CD4-positive, alpha-beta T cell (primary cell): ENCODE measurements at regions of chr5 and their contacts with region 1.

Region 1: DNA sequence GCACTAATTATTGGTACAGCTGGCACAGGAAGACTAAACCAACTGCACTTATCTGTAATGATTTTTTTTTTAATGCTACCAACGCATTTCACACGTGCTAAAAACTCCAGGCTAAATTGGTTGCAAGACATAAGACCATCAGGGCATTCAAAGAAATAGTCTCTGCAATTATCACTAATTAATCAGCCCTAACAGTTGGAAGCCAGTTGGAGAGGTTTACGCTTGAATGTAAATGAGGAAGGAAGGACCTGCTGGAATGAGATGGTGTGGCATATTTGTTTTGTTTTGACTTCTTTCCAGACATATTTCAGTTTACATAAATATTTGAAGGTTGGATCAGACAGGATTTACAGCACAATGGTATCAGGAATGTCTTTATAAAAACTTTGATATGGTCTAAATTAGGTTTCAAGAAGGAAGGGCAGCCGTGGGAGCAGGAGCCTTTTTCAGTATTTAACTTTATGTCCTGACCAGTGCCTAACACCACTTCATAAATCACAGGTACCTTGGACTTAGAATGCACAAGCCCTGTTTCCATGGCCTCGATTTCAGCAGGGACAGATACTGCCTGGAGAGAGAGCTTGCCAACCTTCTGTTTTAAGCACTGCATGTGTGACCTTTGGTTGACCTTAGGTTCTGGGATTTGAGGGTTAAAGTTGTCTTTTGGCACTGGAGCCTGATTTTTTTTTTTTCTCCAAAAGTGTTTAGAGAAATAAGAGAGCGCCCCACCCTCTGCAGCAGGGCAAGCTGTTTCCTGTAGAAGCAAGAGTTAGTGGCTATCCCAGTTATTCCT is 199.8 kb upstream of the MAP3K1 start:
- DNase-seq: peak in 1 of 14 experiments; percentile 15
- ATAC-seq: peak; percentile 25
- H3K4me3 ChIP-seq: no peak overlapping the region
- H3K4me3 Mint-ChIP-seq: peak overlapping the region; percentile 52
- H3K27ac ChIP-seq: peak overlapping the region in 1 of 2 donors; percentile 0
- H3K27ac Mint-ChIP-seq: peak overlapping the region; percentile 82
- H3K4me1 ChIP-seq: peaks cover 43% of the 10 kb centered on the region
- H3K4me1 Mint-ChIP-seq: peaks cover 65% of the 10 kb centered on the region
- H3K27me3 ChIP-seq: no peaks in the 10 kb centered on the region
- H3K27me3 Mint-ChIP-seq: no peaks in the 10 kb centered on the region
- CTCF ChIP-seq: no peak

Region 2: DNA sequence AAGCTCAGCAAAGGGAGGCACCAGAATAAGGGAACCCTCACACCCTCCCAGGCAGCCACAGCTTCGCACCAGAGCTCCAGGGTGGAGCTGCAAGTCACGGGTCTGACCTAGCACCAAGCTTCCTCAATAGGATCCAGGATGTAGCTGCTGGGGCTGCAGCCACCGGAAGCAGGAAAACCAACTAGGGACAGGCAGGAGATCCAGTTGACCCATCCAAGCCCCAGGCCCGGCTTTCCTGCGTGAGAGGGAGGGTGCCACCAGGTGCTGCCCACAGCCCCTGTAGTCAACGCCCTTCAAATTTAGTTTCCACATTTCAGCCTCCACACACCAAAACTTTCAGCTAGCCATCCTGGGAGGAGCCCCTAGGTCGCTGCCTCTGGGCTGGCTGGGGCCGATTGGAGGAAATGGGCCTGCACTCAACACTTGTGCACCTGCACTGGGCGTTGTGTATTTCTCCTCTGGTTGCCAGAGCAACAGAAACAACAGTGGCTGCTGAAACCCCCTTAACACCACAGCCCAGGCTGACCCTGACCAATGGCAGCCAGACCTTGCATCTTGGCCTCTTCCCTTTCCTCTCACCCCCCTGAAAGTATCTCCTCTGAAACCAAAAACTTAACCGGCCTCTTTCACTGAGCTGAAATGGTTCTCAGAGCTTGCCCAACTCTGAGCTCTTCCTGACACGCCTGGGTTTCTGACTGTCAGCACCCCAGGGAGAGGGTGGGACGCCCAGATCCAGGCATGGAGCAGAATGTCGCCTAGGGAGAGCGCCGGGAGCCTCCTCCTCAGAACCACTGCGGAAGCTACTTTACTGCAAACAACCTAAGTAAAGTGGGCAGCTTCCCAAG is 26.7 kb before region 1 on chr5:
- CTCF ChIA-PET with region 1: interaction called, 3 read pairs
- POLR2A ChIA-PET with region 1: interaction called, 10 read pairs
- intact Hi-C with region 1: no loop called
- DNase-seq: peak; percentile 32 to 92 (median 60)
- ATAC-seq: peak; percentile 72
- H3K4me3 ChIP-seq: no peak overlapping the region
- H3K4me3 Mint-ChIP-seq: peak overlapping the region; percentile 52
- H3K27ac ChIP-seq: peak overlapping the region; percentile 60 to 95
- H3K27ac Mint-ChIP-seq: peak overlapping the region; percentile 87
- H3K4me1 ChIP-seq: peaks cover 51% of the 10 kb centered on the region
- H3K4me1 Mint-ChIP-seq: peaks cover 62% of the 10 kb centered on the region
- H3K27me3 ChIP-seq: no peaks in the 10 kb centered on the region
- H3K27me3 Mint-ChIP-seq: no peaks in the 10 kb centered on the region
- CTCF ChIP-seq: no peak

Region 3: DNA sequence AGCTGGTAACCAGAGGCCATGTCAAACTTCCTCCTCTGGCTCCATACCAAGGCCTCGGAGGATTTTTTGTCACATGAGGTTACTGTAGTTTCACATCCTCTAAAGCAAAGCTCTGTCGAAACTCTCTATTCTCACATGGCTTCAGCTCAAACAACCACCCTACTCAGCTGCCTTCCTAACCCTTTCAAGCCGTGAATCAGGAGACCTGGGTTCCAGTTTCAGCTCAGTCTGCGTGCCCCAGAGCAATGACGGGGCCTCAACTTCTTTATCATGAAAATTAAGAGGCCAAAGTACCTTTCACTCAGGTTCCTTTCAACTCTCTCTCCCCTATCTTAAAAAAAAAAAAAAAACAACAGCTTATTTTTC is 54.5 kb after region 1 on chr5:
- CTCF ChIA-PET with region 1: no interaction called
- POLR2A ChIA-PET with region 1: interaction called, 13 read pairs
- intact Hi-C with region 1: no loop called
- DNase-seq: peak in 9 of 14 experiments; percentile 10 to 84 (median 23)
- ATAC-seq: peak; percentile 84
- H3K4me3 ChIP-seq: no peak overlapping the region
- H3K4me3 Mint-ChIP-seq: peak overlapping the region; percentile 36
- H3K27ac ChIP-seq: peak overlapping the region; percentile 57 to 70
- H3K27ac Mint-ChIP-seq: peak overlapping the region; percentile 79
- H3K4me1 ChIP-seq: peaks cover 39% of the 10 kb centered on the region
- H3K4me1 Mint-ChIP-seq: peaks cover 32% of the 10 kb centered on the region
- H3K27me3 ChIP-seq: no peaks in the 10 kb centered on the region
- H3K27me3 Mint-ChIP-seq: no peaks in the 10 kb centered on the region
- CTCF ChIP-seq: no peak

Region 4: DNA sequence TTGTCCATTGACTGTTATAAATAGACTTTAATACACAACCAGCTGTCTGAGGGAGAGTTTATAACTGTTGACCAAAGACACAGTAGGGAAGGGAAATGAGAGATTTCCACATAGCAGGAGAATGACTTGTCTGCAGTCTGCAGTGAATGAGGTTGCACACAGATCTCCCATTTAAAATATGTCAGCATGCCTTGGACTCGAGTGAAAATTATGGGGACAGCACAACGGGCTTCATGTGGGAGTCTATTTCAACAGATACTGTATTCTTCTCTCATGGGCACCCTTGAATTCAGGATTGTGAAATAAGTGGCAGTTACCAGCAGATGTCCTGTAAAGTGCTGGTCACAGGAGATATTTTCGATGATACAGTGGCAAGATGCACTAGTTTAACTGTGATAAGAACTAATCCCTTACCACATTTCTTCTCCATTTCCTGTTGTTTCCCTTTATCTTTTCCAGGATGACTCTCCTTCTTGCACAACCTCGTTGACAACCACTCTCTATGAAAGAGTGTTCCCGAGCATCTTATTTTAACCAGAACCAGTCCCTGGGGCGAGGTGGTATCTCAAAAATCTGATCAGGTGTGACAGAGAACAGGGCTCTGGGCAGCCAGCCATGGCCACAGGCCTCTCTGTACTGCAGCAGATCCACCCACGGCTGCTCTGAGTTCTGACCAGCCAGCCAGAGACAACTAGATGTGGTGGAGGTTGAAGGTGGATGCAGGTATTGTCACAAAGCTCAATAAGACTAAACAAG is 148.3 kb after region 1 on chr5:
- CTCF ChIA-PET with region 1: no interaction called
- POLR2A ChIA-PET with region 1: no interaction called
- intact Hi-C with region 1: no loop called
- DNase-seq: no peak
- ATAC-seq: no peak
- H3K4me3 ChIP-seq: no peak overlapping the region
- H3K4me3 Mint-ChIP-seq: no peak overlapping the region
- H3K27ac ChIP-seq: no peak overlapping the region
- H3K27ac Mint-ChIP-seq: no peak overlapping the region
- H3K4me1 ChIP-seq: no peaks in the 10 kb centered on the region
- H3K4me1 Mint-ChIP-seq: peaks cover 7% of the 10 kb centered on the region
- H3K27me3 ChIP-seq: no peaks in the 10 kb centered on the region
- H3K27me3 Mint-ChIP-seq: no peaks in the 10 kb centered on the region
- CTCF ChIP-seq: no peak